SK-N-SH (cell line): ENCODE measurements at regions of chr10 and their contacts with region 1.

Region 1: DNA sequence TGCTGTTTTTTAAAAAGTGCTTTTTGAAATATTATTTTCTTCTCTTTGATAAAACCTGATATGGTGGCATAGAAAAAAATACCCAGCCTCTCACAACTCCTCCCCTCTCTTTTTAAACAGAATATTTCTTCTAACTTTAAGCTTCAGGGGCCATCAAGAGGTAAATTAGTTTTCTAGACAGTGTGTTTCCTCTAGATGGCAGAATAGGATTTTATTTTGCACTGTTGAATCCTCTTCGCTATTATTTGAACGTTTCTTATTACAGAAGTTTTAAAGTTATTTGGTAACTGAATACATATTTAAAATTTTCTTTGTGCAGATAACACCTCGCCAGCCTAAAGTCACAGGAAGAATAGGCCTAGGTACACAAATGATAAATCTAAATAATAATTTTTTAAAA is 30.3 kb downstream of the ARL5B start:
- DNase-seq: peak; percentile 43
- H3K4me3 ChIP-seq: no peak overlapping the region
- H3K27ac ChIP-seq: no peak overlapping the region
- H3K4me1 ChIP-seq: no peaks in the 10 kb centered on the region
- H3K27me3 ChIP-seq: no peaks in the 10 kb centered on the region
- CTCF ChIP-seq: peak; percentile 73
- EP300 ChIP-seq: no peak
- RAD21 ChIP-seq: peak; percentile 83

Region 2: DNA sequence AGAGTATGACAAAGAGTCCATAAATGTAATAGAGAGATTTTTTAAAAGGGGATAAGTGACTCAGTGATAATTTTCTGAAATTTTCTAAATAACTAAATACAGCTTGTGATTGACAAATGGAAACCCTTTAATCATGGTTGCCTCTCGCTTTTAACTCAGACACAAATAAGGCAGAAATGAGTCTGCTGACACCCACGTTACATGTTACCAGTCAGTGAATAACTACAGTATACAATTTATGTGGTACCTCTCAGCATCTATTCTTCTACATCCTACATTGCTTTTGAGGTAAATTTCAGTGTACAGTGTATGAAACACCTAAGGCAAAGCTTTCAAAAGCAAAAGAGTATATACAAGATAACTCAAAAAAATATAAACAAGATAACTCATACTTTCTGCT is 42.3 kb before region 1 on chr10:
- CTCF ChIA-PET with region 1: no interaction called
- POLR2A ChIA-PET with region 1: no interaction called
- DNase-seq: no peak
- H3K4me3 ChIP-seq: no peak overlapping the region
- H3K27ac ChIP-seq: no peak overlapping the region
- H3K4me1 ChIP-seq: no peaks in the 10 kb centered on the region; a peak in 2 of 4 replicates
- H3K27me3 ChIP-seq: no peaks in the 10 kb centered on the region
- CTCF ChIP-seq: no peak
- EP300 ChIP-seq: no peak
- RAD21 ChIP-seq: no peak

Region 3: DNA sequence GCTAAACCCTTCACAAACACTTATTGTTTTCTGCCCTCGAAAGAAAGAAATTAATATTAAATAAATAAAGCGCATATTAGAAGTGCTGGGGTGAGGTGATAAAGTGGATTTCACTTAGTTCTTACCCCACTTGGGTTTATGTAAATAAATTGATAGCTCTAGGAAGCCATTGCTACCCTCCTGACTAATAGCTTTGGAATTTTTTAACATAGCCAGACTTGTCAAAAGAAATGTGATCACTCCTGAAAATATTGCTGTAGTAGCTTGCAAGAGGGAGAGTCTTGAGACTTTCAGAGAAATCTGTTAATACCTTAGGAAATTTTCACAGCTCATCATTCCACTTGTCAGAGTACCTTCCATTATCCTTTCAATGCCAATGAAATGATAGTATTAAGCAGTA is 22.7 kb before region 1 on chr10:
- CTCF ChIA-PET with region 1: interaction called, 10 read pairs
- POLR2A ChIA-PET with region 1: no interaction called
- DNase-seq: no peak
- H3K4me3 ChIP-seq: no peak overlapping the region
- H3K27ac ChIP-seq: peak overlapping the region in 1 of 2 experiments; percentile 68; a peak in 2 of 4 replicates
- H3K4me1 ChIP-seq: peaks cover 4 to 22% of the 10 kb centered on the region in 2 experiments; a peak in 3 of 4 replicates
- H3K27me3 ChIP-seq: no peaks in the 10 kb centered on the region
- CTCF ChIP-seq: no peak
- EP300 ChIP-seq: no peak
- RAD21 ChIP-seq: no peak

Region 4: DNA sequence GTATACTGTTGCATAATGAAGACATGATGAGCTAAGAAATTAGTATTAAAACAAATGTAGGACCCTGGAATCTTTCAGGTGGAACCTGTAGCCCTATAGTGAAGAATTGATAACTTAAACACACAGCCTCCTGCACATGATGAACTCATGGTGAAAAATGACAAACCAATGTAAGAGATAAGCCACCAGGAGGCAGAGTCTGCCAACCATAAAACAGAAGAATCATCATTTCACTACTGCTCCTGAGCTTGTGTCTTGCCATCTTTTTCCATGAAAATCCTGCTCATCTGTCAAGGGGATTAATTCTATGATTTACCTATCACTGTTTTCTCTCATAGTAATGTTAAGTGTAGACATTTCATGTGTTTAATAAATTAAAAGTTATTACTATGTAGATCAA is 723.0 kb after region 1 on chr10:
- CTCF ChIA-PET with region 1: interaction called, 10 read pairs
- POLR2A ChIA-PET with region 1: no interaction called
- DNase-seq: peak; percentile 19
- H3K4me3 ChIP-seq: no peak overlapping the region
- H3K27ac ChIP-seq: no peak overlapping the region
- H3K4me1 ChIP-seq: no peaks in the 10 kb centered on the region
- H3K27me3 ChIP-seq: no peaks in the 10 kb centered on the region
- CTCF ChIP-seq: peak; percentile 56
- EP300 ChIP-seq: no peak
- RAD21 ChIP-seq: peak; percentile 83